GM12878 (cell line): ENCODE measurements at regions of chr2 and their contacts with region 1.

Region 1: DNA sequence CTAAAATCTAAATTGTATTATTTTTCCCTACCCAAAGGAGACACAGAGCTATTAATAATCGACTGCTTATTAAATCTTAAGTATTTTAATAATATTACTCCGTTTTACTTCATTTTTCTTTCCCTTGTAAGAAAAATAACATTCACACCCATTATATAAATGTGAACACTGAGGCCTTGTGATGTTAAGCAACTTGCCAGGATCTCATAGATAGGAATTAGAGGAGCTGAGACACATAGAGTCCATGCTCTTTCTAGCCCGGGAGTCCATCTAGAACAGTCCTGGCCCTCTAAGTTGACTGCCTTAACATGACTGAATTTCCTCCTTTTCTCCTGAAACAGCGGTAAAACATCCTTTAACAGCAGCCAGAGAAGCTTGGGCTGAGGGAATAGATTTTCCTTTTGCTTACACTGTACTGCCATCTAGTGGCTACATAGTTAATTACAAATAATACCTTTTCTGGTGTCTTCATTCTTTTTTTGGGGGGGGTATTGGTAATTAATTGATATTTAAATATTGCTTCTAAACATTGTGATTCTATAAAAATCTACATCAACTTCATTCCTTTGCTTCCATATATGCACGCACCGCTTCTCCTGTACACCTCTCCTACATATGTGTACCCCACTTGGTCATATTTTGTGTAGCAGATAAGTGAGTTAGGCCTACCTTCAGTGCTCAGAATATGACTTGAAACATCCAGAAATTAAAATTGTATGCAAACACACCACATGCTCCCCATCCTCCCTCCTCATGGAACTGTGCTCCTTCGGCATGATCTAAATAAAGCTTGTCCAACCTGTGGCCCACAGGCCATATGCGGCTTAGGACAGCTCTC is 125.8 kb upstream of the HNMT start:
- DNase-seq: no peak
- ATAC-seq: peak; percentile 76
- H3K4me3 ChIP-seq: no peak overlapping the region
- H3K27ac ChIP-seq: no peak overlapping the region
- H3K4me1 ChIP-seq: no peaks in the 10 kb centered on the region
- H3K27me3 ChIP-seq: no peaks in the 10 kb centered on the region
- CTCF ChIP-seq: peak; percentile 47 to 74 (median 54); a peak in 5 of 6 replicates
- EP300 ChIP-seq: no peak
- POLR2A ChIP-seq: no peak
- RAD21 ChIP-seq: peak; percentile 88

Region 2: GRCh38 chr2:135913727-135914365 is 1924.6 kb before region 1 on chr2:
- CTCF ChIA-PET with region 1: no interaction called
- POLR2A ChIA-PET with region 1: no interaction called
- RAD21 ChIA-PET with region 1: no interaction called
- SMC1A ChIA-PET with region 1: no interaction called
- in situ Hi-C with region 1: loop called (anchors 25 kb)
- intact Hi-C with region 1: no loop called
- DNase-seq: no peak
- ATAC-seq: peak; percentile 75
- H3K4me3 ChIP-seq: no peak overlapping the region
- H3K27ac ChIP-seq: no peak overlapping the region
- H3K4me1 ChIP-seq: no peaks in the 10 kb centered on the region
- H3K27me3 ChIP-seq: no peaks in the 10 kb centered on the region
- CTCF ChIP-seq: peak; percentile 58 to 68 (median 63); a peak in 5 of 6 replicates
- EP300 ChIP-seq: no peak
- POLR2A ChIP-seq: no peak
- RAD21 ChIP-seq: peak; percentile 75

Region 3: DNA sequence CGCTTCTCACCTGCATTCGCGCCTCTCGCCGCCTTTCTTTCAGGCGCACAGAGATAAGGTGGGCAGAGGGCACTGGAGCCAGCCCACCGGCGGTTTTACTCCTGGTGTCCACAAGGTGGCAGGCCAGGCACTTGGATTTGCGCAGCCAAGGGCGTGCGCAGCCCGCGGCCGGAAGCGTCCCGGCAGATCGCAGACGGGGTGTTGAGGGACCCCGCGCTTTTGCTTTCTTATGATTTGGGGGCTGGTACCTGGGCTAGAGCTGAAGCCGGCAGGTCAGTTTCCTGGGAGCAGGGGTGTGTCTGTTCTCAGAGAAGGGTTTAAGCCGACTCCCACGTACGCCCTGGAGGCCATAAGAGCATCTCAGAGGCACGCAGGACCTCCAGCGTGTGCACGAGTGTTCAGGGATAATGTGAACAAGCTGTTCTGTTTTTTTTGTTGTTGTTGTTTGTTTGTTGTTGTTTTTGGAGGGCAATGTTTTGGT is 1414.9 kb before region 1 on chr2:
- CTCF ChIA-PET with region 1: interaction called, 13 read pairs
- POLR2A ChIA-PET with region 1: no interaction called
- RAD21 ChIA-PET with region 1: no interaction called
- SMC1A ChIA-PET with region 1: no interaction called
- in situ Hi-C with region 1: loop called (anchors 5 kb)
- intact Hi-C with region 1: loop called (anchors 2 kb)
- DNase-seq: no peak
- ATAC-seq: peak; percentile 99
- H3K4me3 ChIP-seq: peak overlapping the region; percentile 43; the same call in 1 of the 2 replicates
- H3K27ac ChIP-seq: no peak overlapping the region
- H3K4me1 ChIP-seq: peaks cover 4% of the 10 kb centered on the region; the same call in 1 of the 2 replicates
- H3K27me3 ChIP-seq: peaks cover 0 to 4% of the 10 kb centered on the region in 2 experiments; a peak in 3 of 4 replicates
- CTCF ChIP-seq: peak; percentile 88 to 95 (median 89); a peak in 5 of 6 replicates
- EP300 ChIP-seq: no peak
- POLR2A ChIP-seq: no peak
- RAD21 ChIP-seq: peak; percentile 78

Region 4: DNA sequence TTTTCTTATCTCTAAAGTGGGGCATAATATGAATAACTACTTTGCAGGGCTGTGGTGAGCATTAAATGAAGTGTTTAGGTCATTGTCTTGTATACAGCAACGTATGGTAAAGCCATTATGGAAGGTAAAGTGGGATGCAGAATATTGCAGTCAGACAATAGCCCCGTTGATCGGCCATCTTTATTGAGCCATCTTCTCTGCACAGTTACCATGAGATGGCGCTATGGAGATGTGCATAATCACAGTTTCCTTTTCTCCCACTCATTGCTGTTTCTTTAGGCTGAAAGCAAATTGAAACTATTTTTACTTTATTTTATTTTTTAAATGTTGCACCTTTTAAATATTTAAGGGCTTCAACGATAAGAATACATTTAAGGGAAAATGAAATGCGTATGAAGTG is 964.2 kb before region 1 on chr2:
- CTCF ChIA-PET with region 1: interaction called, 14 read pairs
- POLR2A ChIA-PET with region 1: no interaction called
- RAD21 ChIA-PET with region 1: no interaction called
- SMC1A ChIA-PET with region 1: interaction called, 3 read pairs
- in situ Hi-C with region 1: loop called (anchors 10 kb)
- intact Hi-C with region 1: loop called (anchors 5 kb)
- DNase-seq: no peak
- ATAC-seq: peak; percentile 76
- H3K4me3 ChIP-seq: no peak overlapping the region
- H3K27ac ChIP-seq: no peak overlapping the region
- H3K4me1 ChIP-seq: no peaks in the 10 kb centered on the region
- H3K27me3 ChIP-seq: no peaks in the 10 kb centered on the region
- CTCF ChIP-seq: peak; percentile 28 to 38 (median 35); a peak in 4 of 6 replicates
- EP300 ChIP-seq: no peak
- POLR2A ChIP-seq: no peak
- RAD21 ChIP-seq: peak; percentile 47

Region 5: DNA sequence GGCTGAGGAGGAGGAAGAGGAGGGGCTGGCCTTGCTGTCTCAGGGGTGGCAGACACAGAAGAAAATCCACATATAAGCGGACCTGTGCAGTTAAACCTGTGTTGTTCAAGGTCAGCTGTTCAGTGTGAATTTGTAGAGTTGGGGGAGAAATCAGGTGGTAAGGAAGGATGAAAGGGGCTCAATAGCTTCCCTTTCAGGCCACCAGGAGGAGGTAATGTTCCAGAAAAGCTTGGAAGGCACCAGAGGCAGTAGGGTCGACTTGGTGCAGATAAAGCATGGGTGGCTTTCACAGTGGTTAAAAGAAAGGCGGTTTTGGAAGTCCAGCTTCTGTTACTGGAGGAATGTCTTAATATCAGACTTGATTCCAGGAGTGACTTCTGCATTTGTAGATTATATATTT is 905.8 kb before region 1 on chr2:
- CTCF ChIA-PET with region 1: interaction called, 42 read pairs
- POLR2A ChIA-PET with region 1: no interaction called
- RAD21 ChIA-PET with region 1: interaction called, 14 read pairs
- SMC1A ChIA-PET with region 1: interaction called, 14 read pairs
- in situ Hi-C with region 1: no loop called
- intact Hi-C with region 1: loop called (anchors 1 kb)
- DNase-seq: no peak
- ATAC-seq: peak; percentile 80
- H3K4me3 ChIP-seq: no peak overlapping the region
- H3K27ac ChIP-seq: no peak overlapping the region
- H3K4me1 ChIP-seq: no peaks in the 10 kb centered on the region
- H3K27me3 ChIP-seq: no peaks in the 10 kb centered on the region
- CTCF ChIP-seq: peak; percentile 41 to 60 (median 51); a peak in 5 of 6 replicates
- EP300 ChIP-seq: no peak
- POLR2A ChIP-seq: no peak
- RAD21 ChIP-seq: peak; percentile 59

Region 6: GRCh38 chr2:137467246-137467862 is 371.1 kb before region 1 on chr2:
- CTCF ChIA-PET with region 1: interaction called, 20 read pairs
- POLR2A ChIA-PET with region 1: no interaction called
- RAD21 ChIA-PET with region 1: interaction called, 5 read pairs
- SMC1A ChIA-PET with region 1: interaction called, 8 read pairs
- in situ Hi-C with region 1: loop called (anchors 5 kb)
- intact Hi-C with region 1: loop called (anchors 1 kb)
- DNase-seq: peak; percentile 1
- ATAC-seq: peak; percentile 93
- H3K4me3 ChIP-seq: no peak overlapping the region
- H3K27ac ChIP-seq: no peak overlapping the region
- H3K4me1 ChIP-seq: no peaks in the 10 kb centered on the region
- H3K27me3 ChIP-seq: no peaks in the 10 kb centered on the region
- CTCF ChIP-seq: peak; percentile 62 to 74 (median 74)
- EP300 ChIP-seq: no peak
- POLR2A ChIP-seq: no peak
- RAD21 ChIP-seq: peak; percentile 56

Region 7: DNA sequence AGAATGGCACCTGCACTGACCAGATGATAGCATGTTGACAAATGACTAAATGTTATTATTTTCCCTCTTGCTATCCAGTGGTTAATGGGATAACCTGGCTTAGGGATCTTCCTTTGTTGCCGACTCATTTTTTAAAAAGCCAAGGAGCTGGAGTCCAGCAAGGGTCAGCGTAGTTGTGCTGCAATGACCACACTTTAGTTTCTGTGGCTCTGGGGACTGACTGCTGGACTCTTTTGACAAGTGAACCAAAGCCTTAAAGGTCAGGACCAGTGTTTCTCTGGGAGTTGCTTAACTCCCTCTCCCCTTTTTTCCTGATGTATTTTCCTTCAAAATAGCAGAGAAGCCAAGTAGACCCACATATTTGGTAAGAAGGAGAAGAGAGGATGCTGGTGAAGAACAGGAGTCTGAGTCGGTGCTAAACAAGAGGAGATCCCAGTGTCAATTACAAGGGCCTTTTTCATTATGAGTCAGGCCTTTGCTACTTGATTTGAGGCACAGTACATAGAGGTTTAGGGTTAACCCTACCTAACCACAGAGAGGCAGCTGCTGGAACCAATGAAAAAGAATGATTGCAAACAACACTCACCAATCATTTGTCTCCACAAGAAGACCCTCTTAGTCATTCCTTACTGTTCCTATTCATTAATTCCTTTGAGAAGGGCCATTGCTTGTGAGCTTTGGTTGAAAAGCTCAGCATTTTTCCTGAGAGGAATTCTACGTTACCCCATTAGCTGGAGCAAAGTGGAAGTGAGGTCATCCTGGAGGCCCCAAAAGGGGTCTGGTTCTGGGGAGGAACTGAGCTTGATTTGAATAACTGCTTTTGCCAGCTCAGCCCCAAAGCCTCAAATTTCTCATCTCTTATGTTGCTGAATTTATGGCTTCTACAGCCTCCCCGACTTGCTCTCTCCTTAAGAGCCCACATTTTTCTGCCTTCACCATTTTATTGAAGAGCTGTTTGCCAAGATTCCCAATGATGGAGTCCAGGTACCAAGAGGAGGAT is 11.8 kb before region 1 on chr2:
- CTCF ChIA-PET with region 1: interaction called, 18 read pairs
- POLR2A ChIA-PET with region 1: interaction called, 3 read pairs
- RAD21 ChIA-PET with region 1: interaction called, 5 read pairs
- SMC1A ChIA-PET with region 1: interaction called, 6 read pairs
- in situ Hi-C with region 1: no loop called
- intact Hi-C with region 1: no loop called
- DNase-seq: peak; percentile 19
- ATAC-seq: peak; percentile 98
- H3K4me3 ChIP-seq: no peak overlapping the region
- H3K27ac ChIP-seq: no peak overlapping the region
- H3K4me1 ChIP-seq: no peaks in the 10 kb centered on the region
- H3K27me3 ChIP-seq: no peaks in the 10 kb centered on the region
- CTCF ChIP-seq: no peak
- EP300 ChIP-seq: 0 out of 4 replicates have a peak, but pooled peaks of 1 of the 2 experiments have one; percentile 20
- POLR2A ChIP-seq: no peak
- RAD21 ChIP-seq: no peak

Region 8: DNA sequence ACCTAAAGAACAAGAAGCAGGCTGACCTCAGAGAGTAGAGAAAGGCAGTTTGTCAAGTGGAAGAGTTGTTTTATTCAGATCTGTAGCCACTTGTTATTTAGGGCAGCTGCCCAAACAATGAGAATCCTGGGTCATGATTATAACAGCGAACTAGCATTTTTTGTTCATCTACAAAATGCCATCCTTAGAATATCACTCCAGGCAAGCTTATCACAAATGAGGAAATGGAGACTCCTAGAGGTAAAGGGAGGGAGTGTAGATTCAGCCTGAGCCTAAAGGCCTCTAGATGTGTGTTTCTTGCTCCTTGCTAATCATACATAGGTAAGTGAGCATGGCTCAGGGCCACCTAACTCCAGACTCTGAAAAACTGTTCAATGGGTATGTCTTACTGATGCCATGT is 251.9 kb after region 1 on chr2:
- CTCF ChIA-PET with region 1: no interaction called
- POLR2A ChIA-PET with region 1: no interaction called
- RAD21 ChIA-PET with region 1: no interaction called
- SMC1A ChIA-PET with region 1: no interaction called
- in situ Hi-C with region 1: no loop called
- intact Hi-C with region 1: no loop called
- DNase-seq: no peak
- ATAC-seq: peak; percentile 98
- H3K4me3 ChIP-seq: no peak overlapping the region
- H3K27ac ChIP-seq: no peak overlapping the region
- H3K4me1 ChIP-seq: no peaks in the 10 kb centered on the region
- H3K27me3 ChIP-seq: no peaks in the 10 kb centered on the region
- CTCF ChIP-seq: peak; percentile 56 to 73 (median 58); a peak in 5 of 6 replicates
- EP300 ChIP-seq: no peak
- POLR2A ChIP-seq: no peak
- RAD21 ChIP-seq: peak; percentile 75